ENCODE measurements at regions of chr13 and their contacts with region 1.

Region 1: DNA sequence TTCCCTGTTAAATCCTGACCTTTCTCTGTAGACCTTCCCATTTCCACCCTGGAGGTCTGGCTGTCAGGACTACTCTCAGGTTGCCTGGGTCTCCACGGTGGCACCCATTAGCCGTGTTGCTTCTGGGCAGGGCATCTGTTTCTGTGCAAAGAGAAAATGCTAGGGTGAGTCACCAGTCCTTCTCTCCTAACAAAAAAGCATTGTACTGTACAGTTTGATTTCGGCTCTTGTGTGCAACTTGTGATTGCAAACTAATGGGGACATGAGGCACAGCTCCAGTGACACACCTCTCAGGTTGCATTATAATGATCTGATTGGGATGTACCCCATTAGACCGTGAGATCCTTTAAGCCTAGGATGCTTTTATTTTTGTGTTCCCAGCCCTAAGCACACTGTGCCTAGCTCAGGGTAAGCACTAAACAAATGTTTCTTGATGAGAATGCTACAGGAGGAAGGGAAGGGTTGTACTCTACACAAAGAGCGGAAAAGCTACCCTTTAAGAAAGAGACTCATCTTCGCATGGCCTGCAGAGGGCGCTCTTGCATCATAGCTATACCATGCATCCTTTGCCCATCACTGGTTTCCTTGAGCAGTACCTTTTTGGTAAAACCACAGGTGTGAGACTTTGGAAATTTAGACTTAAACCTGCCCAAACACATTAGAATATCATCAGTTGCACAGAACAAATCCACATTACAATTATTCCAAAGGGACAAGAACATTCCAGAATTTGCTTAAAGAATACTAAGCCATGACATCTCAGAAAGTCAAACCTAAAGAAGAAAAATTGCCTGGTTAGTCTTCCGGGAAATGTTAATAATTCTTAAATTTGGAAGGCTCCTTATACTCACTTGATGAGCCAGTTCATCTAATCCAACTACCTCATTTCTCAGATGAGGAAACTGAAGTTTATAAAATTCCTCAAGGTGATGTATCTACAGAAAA is 20.3 kb upstream of the TRIM13 start:
- DNase-seq: peak; percentile 91
- H3K4me3 Mint-ChIP-seq: no peak overlapping the region
- H3K27ac Mint-ChIP-seq: no peak overlapping the region
- H3K4me1 Mint-ChIP-seq: peaks cover 6% of the 10 kb centered on the region
- H3K27me3 Mint-ChIP-seq: no peaks in the 10 kb centered on the region

Region 2: GRCh38 chr13:49443704-49444523 is 532.7 kb before region 1 on chr13 and contains the starts of genes CAB39L and SETDB2:
- intact Hi-C with region 1: no loop called
- DNase-seq: peak; percentile 100
- H3K4me3 Mint-ChIP-seq: peak within 1 kb of the TSS; percentile 95
- H3K27ac Mint-ChIP-seq: peak within 1 kb of the TSS; percentile 98
- H3K4me1 Mint-ChIP-seq: peaks cover 44% of the 10 kb centered on the region
- H3K27me3 Mint-ChIP-seq: peaks cover 2% of the 10 kb centered on the region
- total RNA-seq, gene CAB39L: 5.7 and 6.8 TPM in 2 replicates
- total RNA-seq, gene SETDB2: 13.4 and 14.5 TPM in 2 replicates

Region 3: GRCh38 chr13:49893591-49893990 is 83.0 kb before region 1 on chr13:
- intact Hi-C with region 1: no loop called
- DNase-seq: no peak
- H3K4me3 Mint-ChIP-seq: no peak overlapping the region
- H3K27ac Mint-ChIP-seq: no peak overlapping the region
- H3K4me1 Mint-ChIP-seq: no peaks in the 10 kb centered on the region
- H3K27me3 Mint-ChIP-seq: no peaks in the 10 kb centered on the region

Region 4: GRCh38 chr13:50529154-50529882 is 552.7 kb after region 1 on chr13:
- intact Hi-C with region 1: loop called (anchors 2 kb)
- DNase-seq: peak; percentile 70
- H3K4me3 Mint-ChIP-seq: peak overlapping the region; percentile 8
- H3K27ac Mint-ChIP-seq: peak overlapping the region; percentile 66
- H3K4me1 Mint-ChIP-seq: peaks cover 34% of the 10 kb centered on the region
- H3K27me3 Mint-ChIP-seq: peaks cover 21% of the 10 kb centered on the region

Region 5: GRCh38 chr13:51070005-51070649 is 1093.5 kb after region 1 on chr13:
- intact Hi-C with region 1: loop called (anchors 1 kb)
- DNase-seq: peak; percentile 94
- H3K4me3 Mint-ChIP-seq: no peak overlapping the region
- H3K27ac Mint-ChIP-seq: no peak overlapping the region
- H3K4me1 Mint-ChIP-seq: peaks cover 18% of the 10 kb centered on the region
- H3K27me3 Mint-ChIP-seq: peaks cover 23% of the 10 kb centered on the region

Measured in activated CD4-positive, alpha-beta T cell treated with anti-CD3 and anti-CD28 coated beads, Interleukin-2, amount 10 ng/mL, durations not matched to agents 24 days and 14 days (primary cell).